ENCODE measurements at regions of chr20 and their contacts with region 1.

Region 1: GRCh38 chr20:324177-325044 is 941 bp upstream of the SOX12 start:
- DNase-seq: peak; percentile 89
- H3K4me3 Mint-ChIP-seq: peak overlapping the region; percentile 82
- H3K27ac Mint-ChIP-seq: peak overlapping the region; percentile 78
- H3K4me1 Mint-ChIP-seq: peaks cover 14% of the 10 kb centered on the region
- H3K27me3 Mint-ChIP-seq: no peaks in the 10 kb centered on the region

Region 2: DNA sequence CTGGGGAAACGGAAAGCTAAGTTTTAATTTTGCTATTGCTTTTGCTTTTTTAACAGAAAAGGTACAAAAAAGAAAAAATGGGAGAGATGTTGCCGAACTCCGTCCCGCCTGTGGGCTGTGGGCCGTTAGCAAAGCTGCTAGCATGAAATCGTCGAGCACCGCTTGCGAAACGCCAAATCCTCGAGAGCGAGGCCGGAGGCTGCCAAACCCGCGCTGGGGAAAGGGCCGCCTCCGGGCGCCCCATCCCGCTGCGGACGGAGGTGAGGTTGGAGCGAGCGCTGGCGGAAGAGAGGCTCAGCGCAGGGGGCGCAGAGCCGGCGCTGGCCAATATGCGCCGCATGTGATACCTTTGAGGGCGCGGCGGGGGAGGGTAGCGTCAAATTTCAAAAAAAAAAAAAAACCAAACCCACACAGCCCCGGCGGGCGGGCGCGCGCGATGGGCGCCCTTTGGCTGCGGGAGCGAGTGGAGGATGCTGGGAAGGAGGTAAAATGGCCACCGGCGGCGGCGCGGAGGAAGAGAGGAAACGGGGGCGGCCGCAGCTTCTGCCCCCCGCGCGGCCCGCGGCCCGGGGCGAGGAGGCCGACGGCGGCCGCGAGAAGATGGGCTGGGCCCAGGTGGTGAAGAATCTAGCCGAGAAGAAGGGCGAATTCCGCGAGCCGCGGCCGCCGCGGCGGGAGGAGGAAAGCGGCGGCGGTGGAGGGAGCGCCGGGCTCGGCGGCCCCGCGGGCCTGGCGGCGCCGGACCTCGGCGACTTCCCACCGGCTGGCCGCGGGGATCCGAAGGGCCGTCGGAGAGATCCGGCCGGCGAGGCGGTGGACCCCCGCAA is 27.1 kb before region 1 on chr20 and contains the start of gene ZCCHC3:
- CTCF ChIA-PET with region 1: interaction called, 25 read pairs
- POLR2A ChIA-PET with region 1: interaction called, 17 read pairs
- intact Hi-C with region 1: loop called (anchors 1 kb)
- DNase-seq: peak; percentile 89
- H3K4me3 Mint-ChIP-seq: peak within 1 kb of the TSS; percentile 88
- H3K27ac Mint-ChIP-seq: peak within 1 kb of the TSS; percentile 96
- H3K4me1 Mint-ChIP-seq: peaks cover 42% of the 10 kb centered on the region
- H3K27me3 Mint-ChIP-seq: no peaks in the 10 kb centered on the region
- total RNA-seq, gene ZCCHC3: 15.2 to 15.9 TPM

Region 3: DNA sequence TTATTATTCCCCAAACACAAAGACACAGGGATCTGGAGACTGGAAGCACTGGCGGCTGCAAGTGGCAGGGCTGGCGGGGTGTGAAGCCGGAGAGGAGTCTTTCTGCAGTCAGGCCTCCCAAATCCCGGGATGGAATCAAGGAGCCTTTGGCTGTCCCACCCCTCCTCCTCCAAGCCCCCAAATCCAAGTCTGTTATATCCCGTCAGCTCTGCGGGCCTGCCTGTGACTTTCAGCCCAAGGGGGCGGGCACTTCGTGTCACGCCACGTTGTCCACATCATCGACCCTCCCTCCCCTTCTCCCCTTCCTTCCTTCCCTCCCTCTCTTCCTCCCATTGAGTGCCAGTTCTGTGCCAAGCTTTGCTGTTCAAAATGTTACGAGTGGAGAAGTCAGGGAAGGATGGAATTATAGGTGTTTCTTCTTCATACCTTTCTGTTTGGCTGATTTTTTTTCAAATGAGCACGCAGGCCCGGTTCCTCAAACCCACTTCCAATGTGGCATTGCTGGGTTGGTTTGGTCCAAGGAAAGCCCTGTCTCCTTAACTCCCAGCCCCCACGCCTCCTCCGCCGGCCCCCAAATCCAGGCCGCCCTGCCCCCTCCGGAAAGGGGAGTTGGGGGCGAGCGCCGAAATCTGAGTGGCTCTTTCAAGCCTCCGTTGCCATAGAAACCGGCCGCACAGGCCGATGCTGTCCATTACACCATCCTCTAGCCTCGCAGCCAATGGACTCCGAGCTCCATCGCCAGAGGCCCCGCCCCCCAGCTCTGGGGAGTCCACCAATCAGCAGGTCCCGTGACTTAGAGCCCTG is 14.4 kb before region 1 on chr20:
- CTCF ChIA-PET with region 1: interaction called, 7 read pairs
- POLR2A ChIA-PET with region 1: no interaction called
- intact Hi-C with region 1: loop called (anchors 1 kb)
- DNase-seq: peak; percentile 89
- H3K4me3 Mint-ChIP-seq: peak overlapping the region; percentile 62
- H3K27ac Mint-ChIP-seq: no peak overlapping the region
- H3K4me1 Mint-ChIP-seq: peaks cover 10% of the 10 kb centered on the region
- H3K27me3 Mint-ChIP-seq: no peaks in the 10 kb centered on the region

Region 4: DNA sequence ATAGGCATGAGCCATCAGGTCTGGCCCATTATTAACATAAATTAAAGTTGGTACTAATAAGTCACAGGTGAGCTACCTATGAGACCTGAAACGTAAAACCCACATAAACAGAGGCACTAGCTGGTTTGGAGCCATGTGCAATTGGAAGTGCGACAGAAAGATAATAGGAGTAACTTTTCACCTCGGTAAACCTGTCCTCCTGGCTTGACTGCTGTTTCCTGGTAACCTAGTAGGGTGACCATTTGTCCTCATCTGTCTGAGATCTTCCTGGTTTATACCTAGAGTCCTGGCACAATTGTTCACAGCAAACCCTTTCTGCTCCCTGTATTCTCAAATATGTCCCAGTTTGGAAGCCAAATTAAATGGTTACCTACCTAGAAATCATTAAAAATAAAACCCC is 130.5 kb after region 1 on chr20:
- CTCF ChIA-PET with region 1: no interaction called
- POLR2A ChIA-PET with region 1: no interaction called
- intact Hi-C with region 1: no loop called
- DNase-seq: no peak
- H3K4me3 Mint-ChIP-seq: no peak overlapping the region
- H3K27ac Mint-ChIP-seq: no peak overlapping the region
- H3K4me1 Mint-ChIP-seq: peaks cover 19% of the 10 kb centered on the region
- H3K27me3 Mint-ChIP-seq: no peaks in the 10 kb centered on the region

Measured in activated CD4-positive, alpha-beta memory T cell treated with anti-CD3 and anti-CD28 coated beads for 36 hours (primary cell).